PC-3 (cell line): ENCODE measurements at regions of chr5 and their contacts with region 1.

Region 1: GRCh38 chr5:169474226-169474625 is 109.3 kb upstream of the SPDL1 start:
- DNase-seq: no peak
- ATAC-seq: peak; percentile 54; the same call in 1 of the 2 replicates
- H3K4me3 ChIP-seq: no peak overlapping the region
- H3K27ac ChIP-seq: no peak overlapping the region
- H3K4me1 ChIP-seq: no peaks in the 10 kb centered on the region
- H3K27me3 ChIP-seq: peaks cover 28% of the 10 kb centered on the region
- CTCF ChIP-seq: peak; percentile 28; the same call in 1 of the 2 replicates

Region 2: GRCh38 chr5:169374761-169375160 is 99.5 kb before region 1 on chr5:
- CTCF ChIA-PET with region 1: no interaction called
- POLR2A ChIA-PET with region 1: no interaction called
- intact Hi-C with region 1: no loop called
- DNase-seq: peak; percentile 14
- ATAC-seq: no peak
- H3K4me3 ChIP-seq: no peak overlapping the region
- H3K27ac ChIP-seq: no peak overlapping the region
- H3K4me1 ChIP-seq: no peaks in the 10 kb centered on the region
- H3K27me3 ChIP-seq: no peaks in the 10 kb centered on the region
- CTCF ChIP-seq: no peak

Region 3: DNA sequence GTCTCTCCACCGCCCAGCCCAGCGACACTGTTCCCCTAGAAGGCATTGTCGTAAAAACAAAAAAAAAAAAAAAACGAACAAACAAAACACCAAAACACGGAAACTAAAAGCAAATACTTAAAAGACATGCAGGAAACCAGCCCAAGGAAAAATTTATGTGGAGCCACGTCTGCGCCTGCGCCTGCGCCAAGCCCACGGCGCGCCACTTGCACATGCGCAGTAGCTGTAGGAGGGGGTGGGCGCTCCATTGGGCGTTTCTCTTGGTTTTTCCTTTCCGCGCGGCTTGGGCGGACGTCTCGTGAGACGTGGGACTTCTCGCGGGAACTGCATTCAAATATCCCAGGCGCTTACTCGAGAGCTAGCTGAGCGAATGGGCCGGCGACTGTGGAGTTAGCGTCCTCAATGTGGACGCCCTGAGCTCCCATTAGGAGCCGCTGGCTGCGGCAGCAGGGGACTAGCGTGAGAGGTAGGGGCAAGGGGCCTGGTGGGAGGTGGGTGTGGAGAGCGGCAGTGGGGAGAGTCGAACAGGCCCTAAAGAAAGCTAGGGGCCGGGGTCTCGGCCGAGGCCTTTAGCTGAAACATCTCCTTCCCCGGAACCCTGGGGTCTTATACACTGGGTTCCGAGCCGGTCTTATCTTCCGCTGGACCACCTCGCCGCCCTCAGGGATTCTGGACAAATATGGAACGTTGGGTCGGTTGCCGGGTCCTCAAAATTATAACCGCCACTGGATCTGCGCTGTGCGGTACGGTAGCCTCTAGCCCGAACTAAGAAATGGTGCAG is 109.4 kb after region 1 on chr5 and contains the start of gene SPDL1:
- CTCF ChIA-PET with region 1: no interaction called
- POLR2A ChIA-PET with region 1: no interaction called
- intact Hi-C with region 1: loop called (anchors 2 kb)
- DNase-seq: peak; percentile 97
- ATAC-seq: peak; percentile 92
- H3K4me3 ChIP-seq: peak within 1 kb of the TSS; percentile 88
- H3K27ac ChIP-seq: peak within 1 kb of the TSS; percentile 66
- H3K4me1 ChIP-seq: peaks cover 17% of the 10 kb centered on the region
- H3K27me3 ChIP-seq: no peaks in the 10 kb centered on the region
- CTCF ChIP-seq: no peak
- total RNA-seq, gene SPDL1: 29.9 and 38.8 TPM in 2 replicates

Region 4: DNA sequence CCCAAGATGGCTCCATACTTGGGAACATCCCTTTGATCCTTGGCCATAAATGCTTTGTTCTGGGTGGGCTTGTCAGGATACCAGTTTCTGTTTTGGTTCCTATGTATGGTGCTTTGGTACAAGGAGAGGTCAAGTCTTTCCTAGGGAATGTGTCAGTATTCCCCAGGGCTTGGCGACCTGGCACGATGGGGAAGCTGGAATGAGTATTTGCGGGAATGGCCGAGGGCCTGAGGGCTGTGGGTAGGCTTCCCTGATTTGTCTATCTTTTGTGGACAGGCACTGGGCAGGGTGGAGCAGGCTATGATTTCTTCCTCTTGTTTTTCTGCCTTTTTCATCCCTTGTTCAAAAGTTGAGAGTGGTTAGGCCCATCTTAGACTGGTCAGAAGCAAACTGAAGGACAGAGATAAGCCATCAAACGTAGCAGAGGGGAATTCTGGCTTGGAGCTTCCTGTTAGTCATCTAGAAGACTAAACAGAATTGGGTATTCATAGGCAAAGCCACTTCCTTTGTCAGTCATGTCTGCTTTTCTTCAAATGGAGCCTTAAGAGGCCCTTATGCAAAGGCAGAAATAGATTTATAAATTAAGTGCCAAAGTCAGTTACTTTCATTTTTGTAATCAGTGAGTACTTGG is 176.6 kb after region 1 on chr5:
- CTCF ChIA-PET with region 1: no interaction called
- POLR2A ChIA-PET with region 1: no interaction called
- intact Hi-C with region 1: no loop called
- DNase-seq: peak; percentile 70
- ATAC-seq: peak; percentile 89
- H3K4me3 ChIP-seq: no peak overlapping the region
- H3K27ac ChIP-seq: peak overlapping the region; percentile 33
- H3K4me1 ChIP-seq: peaks cover 11% of the 10 kb centered on the region
- H3K27me3 ChIP-seq: no peaks in the 10 kb centered on the region
- CTCF ChIP-seq: no peak